ENCODE measurements at regions of chr11 and their contacts with region 1.

Region 1: GRCh38 chr11:447923-448731 is 2.0 kb upstream of the PTDSS2 start:
- DNase-seq: peak; percentile 99
- ATAC-seq: peak; percentile 79
- H3K4me3 Mint-ChIP-seq: peak overlapping the region; percentile 86
- H3K27ac Mint-ChIP-seq: peak overlapping the region; percentile 93
- H3K4me1 Mint-ChIP-seq: peaks cover 16% of the 10 kb centered on the region
- H3K27me3 Mint-ChIP-seq: peaks cover 3% of the 10 kb centered on the region

Region 2: GRCh38 chr11:236774-237767 is 211.1 kb before region 1 on chr11 and contains the start of gene PSMD13:
- CTCF ChIA-PET with region 1: interaction called, 3 read pairs
- POLR2A ChIA-PET with region 1: no interaction called
- intact Hi-C with region 1: loop called in 1 of 2 experiments (anchors 1 kb)
- DNase-seq: peak; percentile 96
- ATAC-seq: peak; percentile 86
- H3K4me3 Mint-ChIP-seq: peak within 1 kb of the TSS; percentile 92
- H3K27ac Mint-ChIP-seq: peak within 1 kb of the TSS; percentile 99
- H3K4me1 Mint-ChIP-seq: peaks cover 48% of the 10 kb centered on the region
- H3K27me3 Mint-ChIP-seq: no peaks in the 10 kb centered on the region
- total RNA-seq, gene PSMD13: 134 to 212 TPM

Region 3: GRCh38 chr11:304915-305843 is 142.9 kb before region 1 on chr11:
- CTCF ChIA-PET with region 1: interaction called, 4 read pairs
- POLR2A ChIA-PET with region 1: no interaction called
- intact Hi-C with region 1: loop called in 1 of 2 experiments (anchors 5 kb)
- DNase-seq: peak; percentile 79
- ATAC-seq: no peak
- H3K4me3 Mint-ChIP-seq: no peak overlapping the region
- H3K27ac Mint-ChIP-seq: peak overlapping the region; percentile 1
- H3K4me1 Mint-ChIP-seq: peaks cover 20% of the 10 kb centered on the region
- H3K27me3 Mint-ChIP-seq: no peaks in the 10 kb centered on the region

Region 4: DNA sequence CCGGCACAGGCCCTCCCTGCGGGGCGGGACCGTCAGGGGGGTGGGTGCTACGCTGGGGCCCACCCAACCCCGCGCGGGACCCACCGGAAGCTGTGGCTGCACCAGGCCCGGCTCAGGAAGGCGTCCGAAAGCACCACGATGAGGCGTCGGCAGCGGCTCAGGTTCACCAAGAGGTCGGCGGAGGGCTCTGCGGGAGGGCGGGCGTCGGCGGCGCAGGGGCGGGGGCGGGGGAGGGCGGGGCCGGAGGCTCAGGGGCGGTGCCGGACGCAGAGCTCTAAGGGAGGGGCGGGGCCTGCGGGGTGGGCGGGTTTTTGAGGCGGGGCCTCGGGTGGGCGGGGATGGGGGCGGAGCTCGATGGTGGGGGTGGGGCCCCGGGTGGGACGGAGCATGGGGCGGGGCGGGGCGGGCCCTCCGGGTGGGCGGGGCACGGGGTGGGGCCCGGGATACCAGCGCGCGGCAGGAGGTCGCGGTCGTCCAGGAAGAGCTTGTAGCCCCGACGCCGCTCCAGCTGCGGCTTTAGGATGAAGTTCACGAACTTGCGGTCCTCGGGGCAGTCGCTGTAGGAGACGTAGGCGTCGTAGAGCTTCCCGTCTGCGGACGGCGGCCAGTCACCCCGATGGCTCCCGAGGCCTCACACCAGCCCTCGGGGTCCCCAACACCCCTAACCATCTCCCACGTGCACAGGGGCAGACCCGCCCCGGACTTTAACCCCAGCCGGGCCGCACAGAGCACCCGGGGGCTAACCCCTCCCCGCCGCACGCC is 41.0 kb before region 1 on chr11:
- CTCF ChIA-PET with region 1: interaction called, 7 read pairs
- POLR2A ChIA-PET with region 1: no interaction called
- intact Hi-C with region 1: loop called (anchors 1 to 2 kb)
- DNase-seq: peak; percentile 93
- ATAC-seq: peak; percentile 90
- H3K4me3 Mint-ChIP-seq: no peak overlapping the region
- H3K27ac Mint-ChIP-seq: no peak overlapping the region
- H3K4me1 Mint-ChIP-seq: peaks cover 5% of the 10 kb centered on the region
- H3K27me3 Mint-ChIP-seq: no peaks in the 10 kb centered on the region

Region 5: GRCh38 chr11:568306-569157 is 120.4 kb after region 1 on chr11:
- CTCF ChIA-PET with region 1: no interaction called
- POLR2A ChIA-PET with region 1: no interaction called
- intact Hi-C with region 1: loop called in 1 of 2 experiments (anchors 2 kb)
- DNase-seq: peak; percentile 97
- ATAC-seq: peak; percentile 93
- H3K4me3 Mint-ChIP-seq: peak overlapping the region; percentile 88
- H3K27ac Mint-ChIP-seq: peak overlapping the region; percentile 72
- H3K4me1 Mint-ChIP-seq: no peaks in the 10 kb centered on the region
- H3K27me3 Mint-ChIP-seq: no peaks in the 10 kb centered on the region

Region 6: GRCh38 chr11:662689-663274 is 214.7 kb after region 1 on chr11:
- CTCF ChIA-PET with region 1: no interaction called
- POLR2A ChIA-PET with region 1: no interaction called
- intact Hi-C with region 1: no loop called
- DNase-seq: peak; percentile 68
- ATAC-seq: peak; percentile 85
- H3K4me3 Mint-ChIP-seq: no peak overlapping the region
- H3K27ac Mint-ChIP-seq: no peak overlapping the region
- H3K4me1 Mint-ChIP-seq: no peaks in the 10 kb centered on the region
- H3K27me3 Mint-ChIP-seq: no peaks in the 10 kb centered on the region